Spleen (tissue), 13 donors: ENCODE measurements at regions of chr10 and their contacts with region 1.

Region 1: DNA sequence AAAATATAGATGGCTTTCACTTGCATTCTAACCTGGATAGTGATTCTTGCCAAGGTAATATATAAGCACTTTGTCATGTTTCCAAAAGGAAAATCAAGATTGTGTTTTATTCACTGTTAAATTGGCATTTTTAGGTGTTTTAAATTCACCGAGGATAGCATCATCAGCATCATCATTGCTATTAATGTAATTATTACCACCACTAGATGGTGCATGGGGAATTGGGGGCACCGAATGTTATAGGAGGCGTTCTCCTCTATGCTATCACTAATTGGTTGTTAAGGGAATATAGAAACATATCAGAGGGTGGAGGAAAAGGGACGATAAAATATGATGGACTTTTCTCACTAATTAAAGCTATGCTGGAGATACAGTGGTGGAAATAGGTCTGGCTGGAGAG is 95.5 kb downstream of the CELF2 start:
- DNase-seq: no peak
- H3K4me3 ChIP-seq: no peak overlapping the region
- H3K27ac ChIP-seq: no peak overlapping the region
- H3K4me1 ChIP-seq: peaks cover 0 to 18% (median 7%) of the 10 kb centered on the region in 6 donors
- H3K27me3 ChIP-seq: no peaks in the 10 kb centered on the region
- CTCF ChIP-seq: peak in 10 of 11 experiments; percentile 31 to 70 (median 50)
- POLR2A ChIP-seq: no peak

Region 2: DNA sequence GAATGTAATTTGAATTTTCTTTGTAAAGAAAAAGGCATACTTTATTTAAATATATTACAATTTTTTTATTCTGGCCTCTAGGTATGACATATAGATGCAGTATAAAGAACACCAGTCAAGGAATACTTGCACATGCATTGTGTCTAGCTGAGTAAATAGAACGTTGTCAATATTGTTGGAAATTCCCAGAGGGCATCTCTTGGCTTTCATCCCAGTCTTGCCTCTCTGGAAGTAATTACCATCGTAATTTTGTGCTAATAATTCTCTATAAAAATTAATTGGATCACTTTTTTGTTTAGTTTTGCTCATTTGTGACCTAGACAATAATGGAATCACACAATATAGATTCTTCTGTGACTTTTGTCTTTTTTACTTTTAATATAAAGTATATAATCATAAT is 1147.8 kb before region 1 on chr10:
- intact Hi-C with region 1: no loop called
- DNase-seq: no peak
- H3K4me3 ChIP-seq: no peak overlapping the region
- H3K27ac ChIP-seq: no peak overlapping the region
- H3K4me1 ChIP-seq: no peaks in the 10 kb centered on the region
- H3K27me3 ChIP-seq: no peaks in the 10 kb centered on the region
- CTCF ChIP-seq: no peak
- POLR2A ChIP-seq: no peak

Region 3: GRCh38 chr10:11270135-11270857 is 157.1 kb after region 1 on chr10:
- intact Hi-C with region 1: loop called (anchors 10 kb)
- DNase-seq: peak; percentile 90
- H3K4me3 ChIP-seq: no peak overlapping the region
- H3K27ac ChIP-seq: peak overlapping the region in 2 of 8 donors; percentile 1 to 8
- H3K4me1 ChIP-seq: peaks cover 0 to 77% (median 32%) of the 10 kb centered on the region in 6 donors
- H3K27me3 ChIP-seq: no peaks in the 10 kb centered on the region
- CTCF ChIP-seq: peak; percentile 51 to 85 (median 77)
- POLR2A ChIP-seq: no peak